ENCODE measurements at regions of chr11 and their contacts with region 1.

Region 1: GRCh38 chr11:64204464-64204989 is 2.0 kb upstream of the FERMT3 start:
- DNase-seq: no peak
- H3K4me3 ChIP-seq: no peak overlapping the region
- H3K27ac ChIP-seq: peak overlapping the region in 3 of 4 donors; percentile 38 to 89 (median 87)
- H3K4me1 ChIP-seq: peaks cover 4 to 52% (median 8%) of the 10 kb centered on the region in 3 donors
- H3K27me3 ChIP-seq: no peaks in the 10 kb centered on the region
- CTCF ChIP-seq: peak; percentile 66 to 87 (median 73)
- POLR2A ChIP-seq: no peak

Region 2: DNA sequence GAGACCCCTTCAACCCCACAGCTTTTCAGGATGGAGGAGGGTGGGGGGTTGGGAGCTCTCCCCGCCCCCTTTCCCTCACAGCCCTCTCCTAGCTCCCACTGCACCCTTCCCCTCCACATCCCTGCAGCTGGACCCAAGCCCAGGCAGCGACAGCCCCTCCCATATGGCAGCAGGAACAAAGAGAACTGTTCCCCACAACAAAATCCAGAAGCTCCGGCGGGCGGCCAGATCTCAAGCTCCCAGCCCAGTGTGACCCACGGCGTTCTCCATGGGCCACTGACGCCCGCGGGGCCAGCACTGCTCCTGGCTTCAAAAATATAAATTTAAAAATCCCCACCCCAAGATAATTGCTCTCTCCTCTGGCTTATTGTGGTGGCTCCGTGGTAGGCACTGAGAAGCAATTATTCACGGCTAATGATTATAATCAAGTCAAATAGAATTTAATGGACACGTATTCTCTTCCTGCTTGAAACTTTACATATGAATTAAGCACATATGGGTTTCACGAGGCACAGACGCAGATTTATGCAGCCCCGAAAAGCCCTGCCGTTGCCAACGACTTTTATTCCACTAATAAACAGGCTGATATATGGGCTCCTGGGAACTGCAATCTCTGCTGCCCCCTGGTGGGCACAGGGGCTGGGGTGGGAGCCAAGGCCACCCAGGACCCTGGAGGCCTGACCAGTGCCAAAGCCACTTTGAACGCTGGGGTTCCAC is 56.2 kb before region 1 on chr11:
- intact Hi-C with region 1: no loop called
- DNase-seq: no peak
- H3K4me3 ChIP-seq: peak overlapping the region in 3 of 4 donors; percentile 19 to 53 (median 24)
- H3K27ac ChIP-seq: peak overlapping the region in 2 of 4 donors; percentile 48 to 50
- H3K4me1 ChIP-seq: peaks cover 3 to 35% (median 13%) of the 10 kb centered on the region in 3 donors
- H3K27me3 ChIP-seq: no peaks in the 10 kb centered on the region
- CTCF ChIP-seq: peak; percentile 85 to 96 (median 94)
- POLR2A ChIP-seq: no peak

Region 3: GRCh38 chr11:64304316-64305072 is 100.0 kb after region 1 on chr11:
- intact Hi-C with region 1: loop called (anchors 5 kb)
- DNase-seq: peak; percentile 67
- H3K4me3 ChIP-seq: peak overlapping the region; percentile 35 to 86 (median 74)
- H3K27ac ChIP-seq: peak overlapping the region; percentile 92 to 97 (median 94)
- H3K4me1 ChIP-seq: peaks cover 33 to 64% (median 37%) of the 10 kb centered on the region in 3 donors
- H3K27me3 ChIP-seq: peaks cover 0 to 35% (median 6%) of the 10 kb centered on the region in 4 donors
- CTCF ChIP-seq: peak; percentile 81 to 95 (median 92)
- POLR2A ChIP-seq: peak in 1 of 4 donors; percentile 19

Region 4: GRCh38 chr11:64314489-64315226 is 110.1 kb after region 1 on chr11:
- intact Hi-C with region 1: no loop called
- DNase-seq: no peak
- H3K4me3 ChIP-seq: no peak overlapping the region
- H3K27ac ChIP-seq: peak overlapping the region; percentile 48 to 83 (median 74)
- H3K4me1 ChIP-seq: peaks cover 45 to 87% (median 55%) of the 10 kb centered on the region in 3 donors
- H3K27me3 ChIP-seq: no peaks in the 10 kb centered on the region
- CTCF ChIP-seq: no peak
- POLR2A ChIP-seq: no peak